B cell (primary cell): ENCODE measurements at regions of chr7 and their contacts with region 1.

Region 1: GRCh38 chr7:30164567-30164966 is 29.8 kb downstream of the MTURN start:
- DNase-seq: peak; percentile 61
- ATAC-seq: peak; percentile 39
- H3K4me3 ChIP-seq: no peak overlapping the region
- H3K4me3 Mint-ChIP-seq: peak overlapping the region; percentile 38
- H3K27ac ChIP-seq: no peak overlapping the region
- H3K27ac Mint-ChIP-seq: no peak overlapping the region
- H3K4me1 ChIP-seq: peaks cover 31 to 37% of the 10 kb centered on the region in 2 donors
- H3K4me1 Mint-ChIP-seq: peaks cover 41% of the 10 kb centered on the region
- H3K27me3 ChIP-seq: no peaks in the 10 kb centered on the region
- H3K27me3 Mint-ChIP-seq: no peaks in the 10 kb centered on the region
- CTCF ChIP-seq: peak; percentile 76

Region 2: DNA sequence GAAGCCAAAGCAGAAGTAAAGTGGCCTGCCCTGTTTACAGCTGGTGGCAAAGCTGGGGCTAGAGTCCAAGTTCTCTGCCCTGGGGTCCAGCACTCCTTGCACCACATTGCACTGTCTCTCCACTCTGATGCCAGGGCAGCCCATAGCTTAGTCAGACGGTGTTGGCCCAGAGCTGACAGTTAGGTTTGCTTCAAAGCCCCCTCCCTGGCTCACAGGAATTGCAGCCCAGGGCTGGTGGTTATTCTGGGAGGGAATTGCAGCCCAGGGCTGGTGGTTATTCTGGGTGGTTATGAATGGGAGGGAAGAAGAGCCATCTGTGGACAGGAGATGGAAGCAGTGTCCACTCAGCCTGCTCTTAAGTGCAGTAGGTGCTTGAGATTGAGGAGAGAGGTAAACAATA is 263.8 kb before region 1 on chr7:
- CTCF ChIA-PET with region 1: no interaction called
- POLR2A ChIA-PET with region 1: no interaction called
- intact Hi-C with region 1: no loop called
- DNase-seq: no peak
- ATAC-seq: no peak
- H3K4me3 ChIP-seq: no peak overlapping the region
- H3K4me3 Mint-ChIP-seq: no peak overlapping the region
- H3K27ac ChIP-seq: no peak overlapping the region
- H3K27ac Mint-ChIP-seq: no peak overlapping the region
- H3K4me1 ChIP-seq: no peaks in the 10 kb centered on the region
- H3K4me1 Mint-ChIP-seq: no peaks in the 10 kb centered on the region
- H3K27me3 ChIP-seq: no peaks in the 10 kb centered on the region
- H3K27me3 Mint-ChIP-seq: peaks cover 26% of the 10 kb centered on the region
- CTCF ChIP-seq: no peak

Region 3: GRCh38 chr7:30178748-30179436 is 14.3 kb after region 1 on chr7:
- CTCF ChIA-PET with region 1: interaction called, 18 read pairs
- POLR2A ChIA-PET with region 1: interaction called, 3 read pairs
- intact Hi-C with region 1: no loop called
- DNase-seq: peak; percentile 72
- ATAC-seq: peak; percentile 90
- H3K4me3 ChIP-seq: peak overlapping the region in 3 of 5 experiments; percentile 9 to 37 (median 36)
- H3K4me3 Mint-ChIP-seq: peak overlapping the region; percentile 81
- H3K27ac ChIP-seq: peak overlapping the region; percentile 64 to 70
- H3K27ac Mint-ChIP-seq: peak overlapping the region; percentile 92
- H3K4me1 ChIP-seq: peaks cover 28 to 37% of the 10 kb centered on the region in 2 donors
- H3K4me1 Mint-ChIP-seq: peaks cover 44% of the 10 kb centered on the region
- H3K27me3 ChIP-seq: no peaks in the 10 kb centered on the region
- H3K27me3 Mint-ChIP-seq: no peaks in the 10 kb centered on the region
- CTCF ChIP-seq: no peak

Region 4: GRCh38 chr7:30268586-30268985 is 104.0 kb after region 1 on chr7:
- CTCF ChIA-PET with region 1: interaction called, 14 read pairs
- POLR2A ChIA-PET with region 1: no interaction called
- intact Hi-C with region 1: no loop called
- DNase-seq: no peak
- ATAC-seq: no peak
- H3K4me3 ChIP-seq: no peak overlapping the region
- H3K4me3 Mint-ChIP-seq: no peak overlapping the region
- H3K27ac ChIP-seq: no peak overlapping the region
- H3K27ac Mint-ChIP-seq: no peak overlapping the region
- H3K4me1 ChIP-seq: peaks cover 0 to 13% of the 10 kb centered on the region in 2 donors
- H3K4me1 Mint-ChIP-seq: peaks cover 7% of the 10 kb centered on the region
- H3K27me3 ChIP-seq: no peaks in the 10 kb centered on the region
- H3K27me3 Mint-ChIP-seq: no peaks in the 10 kb centered on the region
- CTCF ChIP-seq: no peak

Region 5: GRCh38 chr7:30284298-30285066 is 119.9 kb after region 1 on chr7 and contains the start of gene ZNRF2:
- CTCF ChIA-PET with region 1: interaction called, 4 read pairs
- POLR2A ChIA-PET with region 1: no interaction called
- intact Hi-C with region 1: loop called (anchors 5 kb)
- DNase-seq: peak; percentile 99
- ATAC-seq: peak; percentile 80
- H3K4me3 ChIP-seq: peak within 1 kb of the TSS; percentile 46 to 91 (median 80)
- H3K4me3 Mint-ChIP-seq: peak within 1 kb of the TSS; percentile 88
- H3K27ac ChIP-seq: peak within 1 kb of the TSS; percentile 84 to 90
- H3K27ac Mint-ChIP-seq: peak within 1 kb of the TSS; percentile 96
- H3K4me1 ChIP-seq: peaks cover 19 to 30% of the 10 kb centered on the region in 2 donors
- H3K4me1 Mint-ChIP-seq: peaks cover 44% of the 10 kb centered on the region
- H3K27me3 ChIP-seq: no peaks in the 10 kb centered on the region
- H3K27me3 Mint-ChIP-seq: no peaks in the 10 kb centered on the region
- CTCF ChIP-seq: peak; percentile 41
- total RNA-seq, gene ZNRF2: 32.0 and 33.6 TPM in 2 replicates

Region 6: DNA sequence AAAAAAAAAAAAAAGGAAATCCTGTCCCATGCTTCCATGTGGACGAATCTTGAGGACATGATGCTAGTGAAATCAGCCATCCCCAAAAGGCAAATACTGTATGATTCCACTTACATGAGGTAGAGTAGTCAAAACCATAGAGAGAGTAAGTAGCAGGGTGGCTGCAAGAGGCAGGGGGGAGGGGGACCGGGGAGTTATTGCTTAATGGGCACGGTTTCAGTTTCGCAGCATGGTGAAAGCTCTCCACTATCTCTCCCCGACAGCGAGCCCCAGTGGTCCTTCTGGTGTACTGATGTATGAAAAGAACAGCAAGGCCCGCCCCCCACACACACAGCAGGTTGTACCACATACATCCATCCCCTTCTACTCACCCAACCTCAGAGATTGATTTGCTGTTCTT is 281.2 kb after region 1 on chr7:
- CTCF ChIA-PET with region 1: interaction called, 5 read pairs
- POLR2A ChIA-PET with region 1: no interaction called
- intact Hi-C with region 1: loop called (anchors 5 kb)
- DNase-seq: peak; percentile 91
- ATAC-seq: peak; percentile 100
- H3K4me3 ChIP-seq: no peak overlapping the region
- H3K4me3 Mint-ChIP-seq: no peak overlapping the region
- H3K27ac ChIP-seq: peak overlapping the region in 1 of 2 donors; percentile 64
- H3K27ac Mint-ChIP-seq: peak overlapping the region; percentile 75
- H3K4me1 ChIP-seq: peaks cover 12% of the 10 kb centered on the region in 2 donors
- H3K4me1 Mint-ChIP-seq: peaks cover 8% of the 10 kb centered on the region
- H3K27me3 ChIP-seq: no peaks in the 10 kb centered on the region
- H3K27me3 Mint-ChIP-seq: no peaks in the 10 kb centered on the region
- CTCF ChIP-seq: peak; percentile 71